ENCODE measurements at regions of chr6 and their contacts with region 1.

Region 1: GRCh38 chr6:156719720-156720563 is 57.2 kb upstream of the ARID1B start:
- DNase-seq: peak; percentile 73
- H3K4me3 Mint-ChIP-seq: peak overlapping the region; percentile 70
- H3K27ac Mint-ChIP-seq: peak overlapping the region; percentile 24
- H3K4me1 Mint-ChIP-seq: peaks cover 16% of the 10 kb centered on the region
- H3K27me3 Mint-ChIP-seq: no peaks in the 10 kb centered on the region

Region 2: GRCh38 chr6:156686995-156687788 is 32.8 kb before region 1 on chr6:
- CTCF ChIA-PET with region 1: interaction called, 4 read pairs
- intact Hi-C with region 1: loop called (anchors 2 kb)
- DNase-seq: peak; percentile 63
- H3K4me3 Mint-ChIP-seq: peak overlapping the region; percentile 82
- H3K27ac Mint-ChIP-seq: peak overlapping the region; percentile 91
- H3K4me1 Mint-ChIP-seq: peaks cover 32% of the 10 kb centered on the region
- H3K27me3 Mint-ChIP-seq: no peaks in the 10 kb centered on the region

Measured in activated naive CD4-positive, alpha-beta T cell treated with anti-CD3 and anti-CD28 coated beads for 36 hours (primary cell).